CD14-positive monocyte (primary cell): ENCODE measurements at regions of chr18 and their contacts with region 1.

Region 1: GRCh38 chr18:76492669-76493212 is 2.3 kb downstream of the ZNF516 start:
- DNase-seq: peak; percentile 98 to 99 (median 99)
- H3K4me3 ChIP-seq: peak overlapping the region; percentile 85 to 99 (median 98)
- H3K4me3 Mint-ChIP-seq: peak overlapping the region; percentile 88 to 93
- H3K27ac ChIP-seq: peak overlapping the region; percentile 82 to 94
- H3K27ac Mint-ChIP-seq: peak overlapping the region; percentile 85 to 96 (median 92)
- H3K4me1 ChIP-seq: peaks cover 44 to 57% of the 10 kb centered on the region in 2 donors
- H3K4me1 Mint-ChIP-seq: peaks cover 50% of the 10 kb centered on the region
- H3K27me3 ChIP-seq: no peaks in the 10 kb centered on the region
- H3K27me3 Mint-ChIP-seq: no peaks in the 10 kb centered on the region
- CTCF ChIP-seq: no peak

Region 2: GRCh38 chr18:76445275-76445674 is 47.5 kb before region 1 on chr18:
- intact Hi-C with region 1: loop called (anchors 5 kb)
- DNase-seq: no peak
- H3K4me3 ChIP-seq: no peak overlapping the region
- H3K4me3 Mint-ChIP-seq: no peak overlapping the region
- H3K27ac ChIP-seq: peak overlapping the region; percentile 34 to 90
- H3K27ac Mint-ChIP-seq: peak overlapping the region in 6 of 7 donors; percentile 0 to 88 (median 50)
- H3K4me1 ChIP-seq: peaks cover 46 to 54% of the 10 kb centered on the region in 2 donors
- H3K4me1 Mint-ChIP-seq: peaks cover 55% of the 10 kb centered on the region
- H3K27me3 ChIP-seq: no peaks in the 10 kb centered on the region
- H3K27me3 Mint-ChIP-seq: peaks cover 0 to 2% (median 0%) of the 10 kb centered on the region in 3 donors
- CTCF ChIP-seq: no peak

Region 3: DNA sequence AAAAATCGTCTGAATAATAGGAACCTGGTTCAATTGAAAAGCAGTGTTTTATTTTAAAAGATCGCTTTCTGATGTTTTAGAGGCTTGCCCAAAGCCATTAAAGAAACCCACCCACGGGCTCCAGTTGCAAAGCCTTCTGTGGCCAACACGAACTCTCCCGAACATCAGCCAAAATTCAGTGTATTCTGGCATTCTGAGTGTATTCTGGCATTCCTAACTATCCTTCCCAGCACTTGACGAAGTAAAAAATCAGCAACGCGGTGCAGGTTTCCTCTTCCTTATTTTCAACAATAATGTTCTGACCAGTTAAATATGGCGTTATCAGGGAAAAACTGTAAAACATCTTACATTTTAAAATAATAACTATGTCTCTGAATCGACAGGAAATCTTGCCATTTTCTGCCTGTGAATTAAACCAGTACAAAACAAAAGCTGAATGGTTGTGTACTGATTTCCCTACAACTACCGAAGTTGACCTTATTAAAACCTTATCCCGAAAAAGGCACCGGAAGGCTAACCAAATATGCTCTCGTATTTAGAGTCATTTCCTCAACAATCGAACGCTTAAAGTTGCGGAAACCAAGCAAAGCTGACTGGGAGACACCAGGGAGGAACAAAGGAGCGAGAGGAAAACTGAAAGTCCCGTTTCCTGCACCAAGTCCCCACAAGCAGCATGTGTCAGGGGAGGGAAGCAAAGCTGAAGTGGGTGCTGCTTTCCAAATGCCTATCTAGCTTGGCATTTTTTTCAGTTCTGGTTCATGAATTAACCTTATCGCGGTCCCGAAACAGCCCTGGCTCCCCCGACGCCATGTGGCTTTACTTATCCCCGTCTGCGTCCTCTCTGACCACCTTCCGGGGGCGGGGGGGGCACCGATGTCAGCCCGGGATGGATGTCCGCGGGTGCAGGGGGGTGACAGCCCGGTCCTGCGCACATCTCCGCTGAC is 42.0 kb before region 1 on chr18:
- intact Hi-C with region 1: loop called (anchors 5 kb)
- DNase-seq: peak in 2 of 3 donors; percentile 61 to 63
- H3K4me3 ChIP-seq: peak overlapping the region; percentile 49 to 78 (median 56)
- H3K4me3 Mint-ChIP-seq: peak overlapping the region; percentile 84 to 93
- H3K27ac ChIP-seq: peak overlapping the region; percentile 83 to 84
- H3K27ac Mint-ChIP-seq: peak overlapping the region; percentile 89 to 96 (median 94)
- H3K4me1 ChIP-seq: peaks cover 88 to 96% of the 10 kb centered on the region in 2 donors
- H3K4me1 Mint-ChIP-seq: peaks cover 94% of the 10 kb centered on the region
- H3K27me3 ChIP-seq: no peaks in the 10 kb centered on the region
- H3K27me3 Mint-ChIP-seq: peaks cover 0 to 2% (median 0%) of the 10 kb centered on the region in 3 donors
- CTCF ChIP-seq: no peak

Region 4: GRCh38 chr18:76475452-76476194 is 17.1 kb before region 1 on chr18:
- intact Hi-C with region 1: loop called in 1 of 2 experiments (anchors 2 kb)
- DNase-seq: peak in 2 of 3 donors; percentile 57 to 77
- H3K4me3 ChIP-seq: peak overlapping the region in 1 of 3 experiments; percentile 57
- H3K4me3 Mint-ChIP-seq: peak overlapping the region in 1 of 2 donors; percentile 72
- H3K27ac ChIP-seq: peak overlapping the region; percentile 74 to 76
- H3K27ac Mint-ChIP-seq: peak overlapping the region; percentile 63 to 93 (median 87)
- H3K4me1 ChIP-seq: peaks cover 88 to 99% of the 10 kb centered on the region in 2 donors
- H3K4me1 Mint-ChIP-seq: peaks cover 92% of the 10 kb centered on the region
- H3K27me3 ChIP-seq: no peaks in the 10 kb centered on the region
- H3K27me3 Mint-ChIP-seq: no peaks in the 10 kb centered on the region
- CTCF ChIP-seq: no peak

Region 5: DNA sequence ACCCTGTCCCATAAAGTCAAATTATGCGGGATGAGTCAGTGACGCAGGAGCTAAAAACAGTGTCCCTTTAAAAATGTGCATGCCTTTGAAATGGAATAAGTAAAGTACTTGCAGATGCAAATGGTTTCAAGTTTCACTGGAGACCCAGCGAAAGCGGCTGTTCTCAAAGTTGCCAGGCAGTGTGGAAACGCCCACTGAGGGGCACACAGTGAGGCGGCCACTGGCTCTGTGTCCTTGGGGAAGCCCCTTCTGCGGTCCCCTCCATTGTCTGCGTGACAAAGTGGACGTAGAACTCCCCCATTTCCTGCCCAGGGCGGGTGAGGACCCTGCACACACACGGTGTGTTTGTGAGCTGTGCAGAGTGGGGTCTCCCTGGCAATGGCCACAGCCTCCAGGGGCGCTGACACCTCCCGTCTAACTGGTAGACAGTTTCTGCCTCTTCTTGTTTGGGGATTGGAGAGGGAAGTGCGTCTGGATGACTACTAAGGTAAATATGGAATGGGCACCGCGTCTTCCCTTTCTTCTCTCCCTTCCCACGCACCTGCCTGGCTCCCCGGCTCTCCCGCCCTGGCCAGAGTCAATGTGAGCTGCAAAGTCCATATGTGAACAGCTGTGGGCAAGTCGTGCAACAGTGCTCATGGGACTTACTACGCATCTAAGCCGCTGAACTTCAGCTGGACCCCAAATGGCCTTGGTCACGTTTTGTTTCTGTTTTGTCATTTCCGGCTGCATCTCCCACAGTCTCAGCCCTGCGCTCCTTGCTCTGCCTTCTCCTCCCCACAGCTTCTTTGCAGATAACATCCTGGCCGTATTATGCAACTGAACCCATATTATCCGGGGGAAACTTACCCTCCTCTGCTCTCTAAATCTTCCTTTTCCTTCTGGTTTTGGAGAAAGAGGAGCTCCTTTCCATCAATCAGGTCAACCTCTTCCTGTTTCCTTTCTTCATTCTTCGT is 36.0 kb after region 1 on chr18:
- intact Hi-C with region 1: loop called in 1 of 2 experiments (anchors 5 kb)
- DNase-seq: peak; percentile 60 to 78 (median 76)
- H3K4me3 ChIP-seq: peak overlapping the region; percentile 38 to 80 (median 50)
- H3K4me3 Mint-ChIP-seq: peak overlapping the region; percentile 90 to 98
- H3K27ac ChIP-seq: peak overlapping the region; percentile 43 to 87
- H3K27ac Mint-ChIP-seq: peak overlapping the region; percentile 90 to 93 (median 92)
- H3K4me1 ChIP-seq: peaks cover 15 to 22% of the 10 kb centered on the region in 2 donors
- H3K4me1 Mint-ChIP-seq: peaks cover 28% of the 10 kb centered on the region
- H3K27me3 ChIP-seq: no peaks in the 10 kb centered on the region
- H3K27me3 Mint-ChIP-seq: peaks cover 0 to 7% (median 2%) of the 10 kb centered on the region in 3 donors
- CTCF ChIP-seq: no peak

Region 6: GRCh38 chr18:76565238-76566180 is 72.8 kb after region 1 on chr18:
- intact Hi-C with region 1: loop called (anchors 5 to 10 kb)
- DNase-seq: peak; percentile 90 to 97 (median 95)
- H3K4me3 ChIP-seq: peak overlapping the region; percentile 34 to 78 (median 56)
- H3K4me3 Mint-ChIP-seq: peak overlapping the region; percentile 70 to 88
- H3K27ac ChIP-seq: peak overlapping the region; percentile 87 to 93
- H3K27ac Mint-ChIP-seq: peak overlapping the region; percentile 93 to 99 (median 95)
- H3K4me1 ChIP-seq: peaks cover 78% of the 10 kb centered on the region in 2 donors
- H3K4me1 Mint-ChIP-seq: peaks cover 75% of the 10 kb centered on the region
- H3K27me3 ChIP-seq: no peaks in the 10 kb centered on the region
- H3K27me3 Mint-ChIP-seq: peaks cover 0 to 3% (median 0%) of the 10 kb centered on the region in 3 donors
- CTCF ChIP-seq: no peak

Region 7: GRCh38 chr18:77114415-77115191 is 621.9 kb after region 1 on chr18:
- intact Hi-C with region 1: loop called in 1 of 2 experiments (anchors 5 kb)
- DNase-seq: peak; percentile 100
- H3K4me3 ChIP-seq: peak overlapping the region in 1 of 3 experiments; percentile 29
- H3K4me3 Mint-ChIP-seq: peak overlapping the region; percentile 72 to 76
- H3K27ac ChIP-seq: peak overlapping the region; percentile 97 to 99
- H3K27ac Mint-ChIP-seq: peak overlapping the region; percentile 96 to 99 (median 98)
- H3K4me1 ChIP-seq: peaks cover 76 to 78% of the 10 kb centered on the region in 2 donors
- H3K4me1 Mint-ChIP-seq: peaks cover 82% of the 10 kb centered on the region
- H3K27me3 ChIP-seq: no peaks in the 10 kb centered on the region
- H3K27me3 Mint-ChIP-seq: no peaks in the 10 kb centered on the region
- CTCF ChIP-seq: no peak